Endothelial cell of umbilical vein (primary cell): ENCODE measurements at regions of chr2 and their contacts with region 1.

Region 1: DNA sequence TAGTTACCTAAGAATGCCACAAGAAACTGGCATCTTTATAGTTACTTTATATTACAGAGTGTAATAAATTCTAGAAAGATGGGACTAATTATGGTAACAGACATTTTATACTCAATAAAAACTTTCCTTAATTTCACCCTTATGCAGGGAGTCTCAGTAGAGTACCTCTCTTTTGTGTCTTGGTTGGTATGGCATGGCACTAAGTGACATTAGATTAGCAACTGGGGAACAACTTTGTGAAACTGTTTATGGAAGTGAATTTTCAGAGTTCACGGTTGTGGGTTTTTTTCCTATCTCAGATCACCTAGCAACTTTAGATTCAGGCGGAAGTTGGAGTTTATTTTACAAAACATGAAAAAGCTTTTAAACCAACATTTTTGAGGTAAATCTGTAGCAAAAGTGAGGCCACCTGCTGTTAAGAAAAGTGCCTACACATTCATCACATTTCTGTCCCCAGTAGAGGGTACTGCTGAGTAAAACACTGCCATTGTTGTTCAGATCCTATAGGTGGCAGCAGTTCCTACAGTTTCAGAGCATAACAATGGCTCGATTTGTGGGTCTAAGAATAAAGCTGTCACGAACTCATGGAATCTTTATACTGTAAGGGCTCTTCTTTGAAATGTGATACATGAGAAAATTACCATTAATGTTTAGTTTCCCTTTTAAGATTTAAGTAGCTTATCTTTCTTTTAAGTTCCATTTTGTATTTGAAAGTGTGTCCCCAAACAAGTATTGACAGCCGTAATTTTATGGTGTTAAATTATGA is 117.6 kb downstream of the CAMKMT start:
- DNase-seq: peak; percentile 89
- H3K4me3 ChIP-seq: no peak overlapping the region
- H3K27ac ChIP-seq: no peak overlapping the region
- H3K4me1 ChIP-seq: no peaks in the 10 kb centered on the region
- H3K27me3 ChIP-seq: no peaks in the 10 kb centered on the region
- CTCF ChIP-seq: peak; percentile 97 to 99
- POLR2A ChIP-seq: no peak

Region 2: GRCh38 chr2:44130441-44130840 is 348.9 kb before region 1 on chr2:
- CTCF ChIA-PET with region 1: no interaction called
- POLR2A ChIA-PET with region 1: no interaction called
- dilution Hi-C with region 1: no loop called
- intact Hi-C with region 1: no loop called
- DNase-seq: no peak
- H3K4me3 ChIP-seq: no peak overlapping the region
- H3K27ac ChIP-seq: no peak overlapping the region
- H3K4me1 ChIP-seq: no peaks in the 10 kb centered on the region
- H3K27me3 ChIP-seq: peaks cover 3 to 6% of the 10 kb centered on the region in 2 experiments
- CTCF ChIP-seq: no peak
- POLR2A ChIP-seq: no peak

Region 3: GRCh38 chr2:44244129-44244871 is 235.0 kb before region 1 on chr2:
- CTCF ChIA-PET with region 1: interaction called, 3 read pairs
- POLR2A ChIA-PET with region 1: no interaction called
- dilution Hi-C with region 1: no loop called
- intact Hi-C with region 1: loop called (anchors 1 kb)
- DNase-seq: peak; percentile 86
- H3K4me3 ChIP-seq: peak overlapping the region; percentile 3 to 59 (median 25)
- H3K27ac ChIP-seq: no peak overlapping the region
- H3K4me1 ChIP-seq: no peaks in the 10 kb centered on the region
- H3K27me3 ChIP-seq: peaks cover 2 to 7% of the 10 kb centered on the region in 2 experiments
- CTCF ChIP-seq: peak; percentile 36 to 46
- POLR2A ChIP-seq: no peak

Region 4: DNA sequence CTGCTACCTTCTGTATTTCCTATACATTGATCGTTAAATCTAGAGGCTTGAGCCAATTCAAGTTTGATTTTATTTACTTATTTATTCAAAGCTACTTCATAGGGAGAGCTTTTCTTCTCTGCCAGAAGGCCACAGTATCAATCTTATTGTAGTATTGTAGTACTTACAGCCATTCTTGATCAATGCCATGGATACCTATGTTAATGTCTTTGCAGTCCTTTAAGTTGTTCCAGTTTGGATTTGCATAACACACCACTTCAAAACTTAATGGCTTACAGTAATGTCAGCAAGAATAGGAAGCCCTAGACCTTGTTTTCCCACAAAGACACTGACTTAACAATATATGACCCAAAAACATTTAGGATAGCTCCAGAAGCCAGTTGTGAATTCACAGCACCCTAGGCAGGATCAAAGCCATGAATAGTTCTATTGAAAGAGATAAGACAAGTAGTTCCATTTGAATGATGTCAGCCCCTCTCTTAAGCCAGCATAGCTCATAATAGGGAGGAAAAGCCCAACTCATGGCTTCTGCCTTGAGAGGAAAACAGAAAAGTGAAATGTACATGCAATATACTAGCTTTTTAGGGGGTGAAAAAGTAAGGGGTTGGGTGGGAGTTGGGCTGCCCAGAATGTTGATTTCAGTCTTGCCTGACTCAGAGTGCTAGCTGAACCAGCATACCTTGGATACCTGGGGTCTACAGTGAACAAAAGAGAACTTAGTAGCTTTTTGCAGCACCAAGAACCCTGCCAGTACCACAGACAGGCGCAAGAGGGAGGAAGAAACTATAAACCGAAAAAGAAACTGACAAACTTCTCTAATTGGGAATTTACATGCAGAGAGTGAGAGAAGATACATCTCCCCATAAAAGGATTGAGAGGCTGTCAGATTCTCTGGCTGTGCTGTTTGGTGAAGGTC is 16.1 kb before region 1 on chr2:
- CTCF ChIA-PET with region 1: interaction called, 33 read pairs
- POLR2A ChIA-PET with region 1: no interaction called
- dilution Hi-C with region 1: no loop called
- intact Hi-C with region 1: no loop called
- DNase-seq: no peak
- H3K4me3 ChIP-seq: no peak overlapping the region
- H3K27ac ChIP-seq: no peak overlapping the region
- H3K4me1 ChIP-seq: no peaks in the 10 kb centered on the region
- H3K27me3 ChIP-seq: no peaks in the 10 kb centered on the region
- CTCF ChIP-seq: no peak
- POLR2A ChIP-seq: no peak

Region 5: GRCh38 chr2:44560352-44560751 is 81.0 kb after region 1 on chr2:
- CTCF ChIA-PET with region 1: interaction called, 28 read pairs
- POLR2A ChIA-PET with region 1: no interaction called
- dilution Hi-C with region 1: no loop called
- intact Hi-C with region 1: no loop called
- DNase-seq: peak; percentile 19
- H3K4me3 ChIP-seq: no peak overlapping the region
- H3K27ac ChIP-seq: no peak overlapping the region
- H3K4me1 ChIP-seq: peaks cover 6% of the 10 kb centered on the region
- H3K27me3 ChIP-seq: no peaks in the 10 kb centered on the region
- CTCF ChIP-seq: peak; percentile 26 to 30
- POLR2A ChIP-seq: no peak

Region 6: GRCh38 chr2:44668336-44668735 is 189.0 kb after region 1 on chr2:
- CTCF ChIA-PET with region 1: interaction called, 31 read pairs
- POLR2A ChIA-PET with region 1: no interaction called
- dilution Hi-C with region 1: no loop called
- intact Hi-C with region 1: loop called (anchors 1 kb)
- DNase-seq: peak; percentile 10
- H3K4me3 ChIP-seq: no peak overlapping the region
- H3K27ac ChIP-seq: no peak overlapping the region
- H3K4me1 ChIP-seq: no peaks in the 10 kb centered on the region
- H3K27me3 ChIP-seq: no peaks in the 10 kb centered on the region
- CTCF ChIP-seq: peak; percentile 2 to 7
- POLR2A ChIP-seq: no peak

Region 7: GRCh38 chr2:44722026-44722625 is 242.8 kb after region 1 on chr2:
- CTCF ChIA-PET with region 1: interaction called, 22 read pairs
- POLR2A ChIA-PET with region 1: no interaction called
- dilution Hi-C with region 1: no loop called
- intact Hi-C with region 1: no loop called
- DNase-seq: no peak
- H3K4me3 ChIP-seq: no peak overlapping the region
- H3K27ac ChIP-seq: no peak overlapping the region
- H3K4me1 ChIP-seq: no peaks in the 10 kb centered on the region
- H3K27me3 ChIP-seq: no peaks in the 10 kb centered on the region
- CTCF ChIP-seq: no peak
- POLR2A ChIP-seq: no peak

Region 8: DNA sequence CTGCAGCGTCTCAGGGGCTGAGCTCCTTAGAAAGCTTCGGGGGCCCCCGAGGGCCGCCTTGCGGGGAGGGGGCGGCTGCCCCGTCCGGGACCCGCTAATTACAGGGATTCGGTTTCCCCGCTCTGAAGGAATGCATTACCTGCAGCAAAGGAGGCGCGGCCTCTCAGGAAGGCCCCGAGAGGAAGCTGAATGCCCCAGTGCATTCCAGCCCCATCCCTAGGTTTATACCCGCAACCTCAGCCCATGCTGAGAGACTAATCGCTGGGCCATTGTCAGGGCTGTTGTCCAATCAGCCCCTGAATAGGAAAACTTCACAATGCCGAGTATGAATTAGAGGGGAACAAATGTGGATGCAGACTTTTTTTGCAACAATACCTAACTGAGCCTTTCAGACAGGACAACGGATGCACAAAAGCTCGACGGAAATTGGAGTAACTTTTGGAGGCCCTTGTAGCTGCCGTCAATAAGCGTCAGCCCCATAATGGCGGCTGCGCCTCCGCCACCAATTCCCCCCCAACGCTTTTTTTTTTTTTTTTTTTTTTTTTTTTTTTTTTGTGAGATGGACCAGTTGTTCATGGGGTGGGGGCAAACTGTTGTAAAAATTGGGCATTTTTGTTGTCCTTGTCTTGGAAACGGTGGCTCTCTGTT is 323.6 kb after region 1 on chr2:
- CTCF ChIA-PET with region 1: interaction called, 28 read pairs
- POLR2A ChIA-PET with region 1: no interaction called
- dilution Hi-C with region 1: no loop called
- intact Hi-C with region 1: no loop called
- DNase-seq: no peak
- H3K4me3 ChIP-seq: peak overlapping the region in 1 of 3 experiments; percentile 64
- H3K27ac ChIP-seq: no peak overlapping the region
- H3K4me1 ChIP-seq: peaks cover 17% of the 10 kb centered on the region
- H3K27me3 ChIP-seq: peaks cover 68 to 95% of the 10 kb centered on the region in 2 experiments
- CTCF ChIP-seq: no peak
- POLR2A ChIP-seq: no peak